Naive thymus-derived CD4-positive, alpha-beta T cell (primary cell): ENCODE measurements at regions of chr9 and their contacts with region 1.

Region 1: DNA sequence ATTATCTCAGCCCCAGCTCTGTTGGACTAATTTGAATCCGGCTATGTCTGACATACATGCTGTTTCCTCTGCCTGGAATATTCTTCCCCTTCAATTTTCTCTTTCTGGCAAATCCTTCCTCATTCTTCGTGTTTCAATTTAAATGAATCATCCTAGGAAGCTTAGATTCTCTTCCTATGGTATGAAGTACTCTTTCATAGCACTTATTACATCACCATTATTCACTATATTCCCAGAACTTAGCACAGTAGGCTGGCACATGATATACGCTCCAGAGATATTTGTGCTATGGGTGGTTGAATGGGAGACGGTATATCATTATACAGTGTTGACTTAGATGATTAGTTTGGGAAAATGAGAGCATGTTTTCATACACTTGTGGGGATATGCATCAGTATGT is 91.0 kb upstream of the JAK2 start:
- DNase-seq: no peak
- ATAC-seq: no peak
- H3K4me3 ChIP-seq: no peak overlapping the region
- H3K4me3 Mint-ChIP-seq: no peak overlapping the region
- H3K27ac ChIP-seq: no peak overlapping the region
- H3K27ac Mint-ChIP-seq: no peak overlapping the region
- H3K4me1 ChIP-seq: no peaks in the 10 kb centered on the region
- H3K4me1 Mint-ChIP-seq: peaks cover 0 to 12% (median 0%) of the 10 kb centered on the region in 7 donors
- H3K27me3 ChIP-seq: no peaks in the 10 kb centered on the region
- H3K27me3 Mint-ChIP-seq: no peaks in the 10 kb centered on the region

Region 2: DNA sequence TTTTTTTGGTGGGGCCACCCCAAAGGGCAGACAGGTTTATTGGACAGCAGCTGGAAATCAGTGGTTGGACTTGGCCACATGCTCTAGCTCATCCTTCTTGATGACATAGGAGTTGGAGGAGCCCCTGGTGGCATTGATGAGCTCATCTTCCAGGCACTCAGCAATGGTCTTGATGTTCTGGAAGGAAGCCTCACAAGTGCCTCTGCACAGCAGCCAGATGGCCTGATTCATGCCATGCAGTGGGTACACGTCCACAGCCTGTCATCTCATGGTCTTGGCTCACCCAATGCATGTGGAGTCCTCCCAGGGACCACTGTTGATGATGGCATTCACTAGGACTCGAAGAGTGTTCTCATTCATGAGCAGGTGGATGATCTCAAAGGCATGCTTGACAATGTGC is 112.7 kb before region 1 on chr9:
- CTCF ChIA-PET with region 1: interaction called, 3 read pairs
- POLR2A ChIA-PET with region 1: interaction called, 12 read pairs
- intact Hi-C with region 1: no loop called
- DNase-seq: no peak
- ATAC-seq: no peak
- H3K4me3 ChIP-seq: no peak overlapping the region
- H3K4me3 Mint-ChIP-seq: no peak overlapping the region
- H3K27ac ChIP-seq: no peak overlapping the region
- H3K27ac Mint-ChIP-seq: peak overlapping the region in 1 of 9 donors; percentile 41
- H3K4me1 ChIP-seq: no peaks in the 10 kb centered on the region
- H3K4me1 Mint-ChIP-seq: no peaks in the 10 kb centered on the region
- H3K27me3 ChIP-seq: peaks cover 0 to under 1% of the 10 kb centered on the region in 2 donors
- H3K27me3 Mint-ChIP-seq: peaks cover 6 to 14% (median 13%) of the 10 kb centered on the region in 5 donors

Region 3: GRCh38 chr9:4939118-4939561 is 45.1 kb after region 1 on chr9:
- CTCF ChIA-PET with region 1: no interaction called
- POLR2A ChIA-PET with region 1: no interaction called
- intact Hi-C with region 1: no loop called
- DNase-seq: peak in 2 of 9 donors; percentile 2 to 24
- ATAC-seq: peak; percentile 88
- H3K4me3 ChIP-seq: no peak overlapping the region
- H3K4me3 Mint-ChIP-seq: peak overlapping the region in 7 of 10 donors; percentile 2 to 56 (median 29)
- H3K27ac ChIP-seq: no peak overlapping the region
- H3K27ac Mint-ChIP-seq: peak overlapping the region in 4 of 9 donors; percentile 7 to 80 (median 24)
- H3K4me1 ChIP-seq: peaks cover 16 to 21% of the 10 kb centered on the region in 2 donors
- H3K4me1 Mint-ChIP-seq: peaks cover 30 to 66% (median 38%) of the 10 kb centered on the region in 7 donors
- H3K27me3 ChIP-seq: no peaks in the 10 kb centered on the region
- H3K27me3 Mint-ChIP-seq: no peaks in the 10 kb centered on the region